ENCODE measurements at regions of chr13 and their contacts with region 1.

Region 1: DNA sequence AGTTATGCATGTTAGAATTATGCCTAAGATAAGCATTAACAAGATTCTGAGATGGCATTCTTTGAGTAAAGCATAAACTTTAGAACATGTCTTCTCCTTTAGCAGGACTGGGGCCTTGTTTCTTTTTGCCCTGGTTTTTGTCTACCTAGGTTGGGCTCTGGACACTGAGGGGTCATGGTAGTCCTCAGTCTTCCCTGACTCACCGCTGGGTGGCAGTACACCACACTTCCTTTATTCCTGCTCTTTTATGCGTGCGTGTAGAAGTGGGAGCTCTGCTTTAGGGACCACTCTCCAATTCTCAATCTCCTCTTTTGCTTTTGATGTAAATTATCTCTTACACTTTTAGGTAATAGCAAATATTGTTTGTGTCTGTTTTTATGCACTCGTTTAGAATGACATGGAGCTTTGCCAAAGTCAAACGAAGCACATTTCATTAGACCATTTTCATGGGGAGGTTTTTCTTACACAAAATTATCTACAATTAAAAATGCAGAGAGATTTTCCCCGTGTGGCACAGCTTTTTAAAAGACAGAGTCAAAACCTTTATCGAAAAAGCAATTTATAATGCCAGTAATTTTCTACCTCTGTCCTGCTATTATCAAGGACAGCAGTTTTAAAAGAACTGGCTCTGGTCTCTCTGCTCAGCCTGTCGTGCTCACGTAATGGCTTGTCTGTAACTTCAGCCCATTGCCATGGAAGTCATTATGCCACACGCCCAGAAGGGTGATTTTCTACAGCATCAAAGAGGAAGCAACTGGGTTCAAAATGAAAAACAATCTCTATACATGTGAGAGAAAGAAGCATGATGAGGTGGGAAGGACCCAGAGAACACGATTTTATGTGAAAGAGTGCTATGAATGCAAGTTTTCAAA is 413.9 kb downstream of the COG6 start:
- DNase-seq: peak; percentile 77 to 86
- ATAC-seq: peak; percentile 94 to 98 (median 96)
- H3K4me3 ChIP-seq: peak overlapping the region; percentile 31
- H3K27ac ChIP-seq: no peak overlapping the region
- H3K4me1 ChIP-seq: peaks cover 11% of the 10 kb centered on the region
- H3K27me3 ChIP-seq: no peaks in the 10 kb centered on the region
- CTCF ChIP-seq: peak; percentile 91

Region 2: DNA sequence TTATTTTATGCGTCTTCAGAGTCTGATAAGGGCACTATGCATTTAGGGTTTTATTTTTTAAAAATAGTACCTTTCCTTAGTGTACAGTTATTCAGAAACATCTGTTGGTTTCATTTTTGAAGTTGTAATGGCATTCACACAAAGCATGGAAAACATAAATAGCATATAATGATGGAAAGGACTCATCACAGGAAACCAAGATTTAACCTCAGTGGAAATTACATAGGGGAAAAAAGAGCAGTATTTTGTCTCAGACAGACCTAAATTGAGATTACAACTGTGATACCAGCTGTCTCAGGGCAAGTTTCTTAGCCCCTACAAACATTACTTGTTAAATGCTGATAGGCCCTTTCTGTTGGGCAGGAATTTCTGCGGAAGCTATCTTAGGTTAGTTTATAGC is 973.9 kb before region 1 on chr13:
- intact Hi-C with region 1: no loop called
- DNase-seq: no peak
- ATAC-seq: no peak
- H3K4me3 ChIP-seq: no peak overlapping the region
- H3K27ac ChIP-seq: no peak overlapping the region
- H3K4me1 ChIP-seq: no peaks in the 10 kb centered on the region
- H3K27me3 ChIP-seq: no peaks in the 10 kb centered on the region
- CTCF ChIP-seq: no peak

Region 3: DNA sequence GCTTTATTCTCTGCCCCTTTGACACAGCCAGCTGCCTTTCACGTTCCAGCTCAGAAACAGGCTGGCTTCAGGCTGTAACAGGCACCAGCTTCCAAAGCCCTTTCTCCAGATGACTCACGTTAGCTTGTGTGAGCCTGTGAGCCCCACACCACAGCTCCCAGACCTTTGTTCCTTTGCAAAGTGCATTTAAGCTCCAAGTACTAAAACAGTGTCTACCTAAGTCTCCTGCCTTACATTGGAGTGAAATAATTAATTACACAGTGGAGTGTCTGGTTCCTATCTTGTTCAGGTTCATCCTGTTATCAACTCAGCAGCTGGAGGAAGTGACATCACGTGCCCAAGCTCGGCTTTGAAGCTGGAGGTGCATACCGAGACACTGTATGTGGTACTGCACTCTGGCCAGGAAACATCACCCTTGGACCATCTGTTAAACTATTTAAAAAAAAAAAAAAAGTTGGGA is 121.3 kb after region 1 on chr13:
- intact Hi-C with region 1: loop called in 1 of 2 experiments (anchors 5 kb)
- DNase-seq: peak in 1 of 2 donors; percentile 40
- ATAC-seq: peak; percentile 72 to 77 (median 73)
- H3K4me3 ChIP-seq: no peak overlapping the region
- H3K27ac ChIP-seq: peak overlapping the region; percentile 54
- H3K4me1 ChIP-seq: peaks cover 39% of the 10 kb centered on the region
- H3K27me3 ChIP-seq: no peaks in the 10 kb centered on the region
- CTCF ChIP-seq: no peak

Region 4: DNA sequence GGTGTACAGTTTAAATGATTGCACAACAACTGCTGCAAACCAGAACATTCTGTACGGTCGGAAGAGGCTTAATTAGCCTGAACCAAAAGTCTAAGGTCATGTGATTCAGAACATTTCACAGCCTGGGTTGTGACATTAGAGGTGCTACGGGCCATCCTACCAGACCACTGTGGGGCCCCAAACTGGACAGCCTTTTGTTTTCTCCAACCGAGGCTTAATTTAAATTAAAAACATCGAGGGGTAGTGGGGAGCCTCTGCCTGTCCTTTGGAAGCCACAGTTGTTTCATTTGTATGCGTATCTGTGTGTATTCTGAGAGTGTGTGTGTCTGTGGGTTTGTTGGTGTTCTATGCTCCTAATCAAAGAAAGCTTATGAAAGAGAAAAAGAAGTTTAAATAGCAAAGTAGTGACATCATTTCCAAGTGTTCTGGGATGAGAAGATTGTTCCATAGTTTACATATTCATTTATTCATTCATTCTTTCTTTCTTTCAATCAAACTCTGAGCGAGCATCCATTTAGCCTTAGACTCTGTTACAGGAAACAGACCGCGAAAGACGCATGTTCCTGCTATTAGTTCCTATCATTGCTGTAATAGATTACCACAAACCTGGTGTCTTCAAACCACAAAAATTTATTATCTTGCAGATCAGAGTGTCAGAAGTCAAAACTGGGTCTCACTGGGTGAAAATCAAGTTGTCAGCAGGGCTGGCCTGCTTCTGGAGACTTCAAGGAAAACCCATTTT is 152.2 kb after region 1 on chr13:
- intact Hi-C with region 1: loop called in 1 of 2 experiments (anchors 10 kb)
- DNase-seq: no peak
- ATAC-seq: peak; percentile 54 to 93 (median 92)
- H3K4me3 ChIP-seq: no peak overlapping the region
- H3K27ac ChIP-seq: no peak overlapping the region
- H3K4me1 ChIP-seq: peaks cover 17% of the 10 kb centered on the region
- H3K27me3 ChIP-seq: no peaks in the 10 kb centered on the region
- CTCF ChIP-seq: no peak

Region 5: GRCh38 chr13:40318366-40318765 is 249.0 kb after region 1 on chr13:
- intact Hi-C with region 1: loop called in 1 of 2 experiments (anchors 10 kb)
- DNase-seq: peak; percentile 53 to 87
- ATAC-seq: peak; percentile 62 to 90 (median 80)
- H3K4me3 ChIP-seq: no peak overlapping the region
- H3K27ac ChIP-seq: no peak overlapping the region
- H3K4me1 ChIP-seq: peaks cover 11% of the 10 kb centered on the region
- H3K27me3 ChIP-seq: no peaks in the 10 kb centered on the region
- CTCF ChIP-seq: no peak

Region 6: DNA sequence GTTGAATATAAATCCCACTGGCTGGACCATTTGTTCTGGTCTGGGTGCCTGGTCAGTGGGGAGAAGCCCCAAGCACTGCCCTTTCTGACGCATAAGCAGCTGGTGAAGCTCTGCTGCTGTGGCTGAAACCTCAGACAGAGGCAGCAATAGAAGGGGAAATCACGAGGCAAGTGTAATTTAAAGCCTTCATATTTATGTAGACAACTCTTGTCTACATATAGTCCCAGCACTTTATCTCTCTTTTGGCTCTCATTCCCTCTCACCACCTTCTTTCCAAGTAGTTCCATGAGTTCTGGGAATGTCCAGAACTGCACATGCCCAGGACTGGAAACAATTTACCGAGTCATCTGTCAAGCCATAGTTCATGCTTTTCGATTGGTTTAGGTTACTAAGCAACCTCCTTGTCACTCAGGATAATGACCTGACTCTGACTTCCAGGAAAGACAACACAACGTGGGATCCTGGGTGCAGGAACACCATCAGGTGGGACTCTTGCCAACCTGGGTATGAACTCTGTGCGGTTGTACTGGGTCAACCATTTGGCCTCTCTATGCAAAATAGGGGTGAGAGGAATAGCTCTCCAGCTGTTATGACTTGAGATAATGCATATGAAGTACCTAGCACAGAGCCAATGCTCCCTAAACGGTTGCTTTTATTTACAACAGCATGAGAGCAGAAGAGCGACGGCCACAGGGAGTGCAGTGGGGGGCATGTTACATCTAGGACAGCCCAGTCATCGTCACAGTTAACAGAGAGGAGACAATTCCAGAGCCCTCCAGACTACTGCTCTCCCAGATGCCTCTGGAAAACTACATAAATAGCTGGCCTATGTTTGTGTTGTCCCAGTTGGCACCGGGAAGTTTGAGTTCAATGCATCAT is 275.1 kb after region 1 on chr13:
- intact Hi-C with region 1: loop called in 1 of 2 experiments (anchors 5 kb)
- DNase-seq: peak; percentile 50 to 86
- ATAC-seq: peak; percentile 82 to 86 (median 85)
- H3K4me3 ChIP-seq: no peak overlapping the region
- H3K27ac ChIP-seq: peak overlapping the region; percentile 81
- H3K4me1 ChIP-seq: peaks cover 44% of the 10 kb centered on the region
- H3K27me3 ChIP-seq: no peaks in the 10 kb centered on the region
- CTCF ChIP-seq: no peak

Region 7: DNA sequence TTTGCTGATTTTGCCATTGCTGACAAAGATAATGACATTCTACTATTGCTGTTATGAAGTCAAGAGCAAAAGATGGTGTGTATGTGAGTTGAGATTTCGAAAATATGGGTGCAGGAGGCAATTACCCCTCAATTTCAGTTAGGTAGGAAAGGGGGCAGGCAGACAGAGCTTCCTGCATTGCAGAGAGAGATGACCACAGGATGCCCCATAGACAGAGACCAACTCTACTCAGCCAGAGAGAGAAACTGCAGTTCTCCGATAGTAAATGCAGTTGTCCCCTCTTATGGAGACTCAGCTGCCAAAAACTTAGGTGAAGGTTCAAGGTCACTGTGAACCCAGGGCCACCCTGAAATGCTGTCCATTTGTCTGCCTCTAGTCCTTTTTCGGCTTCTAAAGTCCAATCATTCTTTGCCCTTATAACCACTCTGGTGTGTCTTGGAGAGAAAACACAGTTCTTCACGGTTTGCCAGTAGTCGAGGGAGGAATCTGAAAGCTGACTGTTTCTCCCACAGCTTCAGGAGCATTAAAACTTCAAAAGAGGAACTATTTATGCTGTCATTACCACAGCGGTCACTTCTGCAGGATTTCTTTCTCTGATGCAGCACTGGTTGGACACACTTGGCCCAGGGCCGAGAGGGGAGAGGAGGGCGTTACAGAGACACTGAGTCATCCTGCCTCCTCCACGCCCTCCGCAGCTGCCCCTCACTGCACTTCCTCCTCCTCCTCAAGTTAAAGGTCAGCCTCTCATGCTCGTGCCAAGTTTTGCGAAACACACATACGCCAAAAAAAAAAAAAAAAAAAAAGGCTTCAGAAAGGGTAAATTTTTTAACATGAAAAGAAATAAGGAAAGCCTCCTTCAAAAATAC is 332.7 kb after region 1 on chr13:
- intact Hi-C with region 1: loop called in 1 of 2 experiments (anchors 5 kb)
- DNase-seq: peak; percentile 98
- ATAC-seq: peak; percentile 89 to 95 (median 92)
- H3K4me3 ChIP-seq: peak overlapping the region; percentile 37
- H3K27ac ChIP-seq: peak overlapping the region; percentile 50
- H3K4me1 ChIP-seq: peaks cover 32% of the 10 kb centered on the region
- H3K27me3 ChIP-seq: no peaks in the 10 kb centered on the region
- CTCF ChIP-seq: no peak

Region 8: GRCh38 chr13:40682449-40683240 is 613.2 kb after region 1 on chr13:
- intact Hi-C with region 1: loop called (anchors 2 to 5 kb)
- DNase-seq: no peak
- ATAC-seq: peak in 3 of 4 donors; percentile 23 to 55 (median 32)
- H3K4me3 ChIP-seq: no peak overlapping the region
- H3K27ac ChIP-seq: no peak overlapping the region
- H3K4me1 ChIP-seq: peaks cover 25% of the 10 kb centered on the region
- H3K27me3 ChIP-seq: no peaks in the 10 kb centered on the region
- CTCF ChIP-seq: peak; percentile 74

Measured in psoas muscle (tissue), 8 donors.